Activated CD8-positive, alpha-beta memory T cell treated with anti-CD3 and anti-CD28 coated beads, Interleukin-2, amount 10 ng/mL, durations not matched to agents 7 days and 5 days (primary cell): ENCODE measurements at regions of chr10 and their contacts with region 1.

Region 1: GRCh38 chr10:84415539-84416244 is 87.3 kb downstream of the CCSER2 start:
- DNase-seq: no peak
- ATAC-seq: no peak
- H3K4me3 Mint-ChIP-seq: no peak overlapping the region
- H3K27ac Mint-ChIP-seq: no peak overlapping the region
- H3K4me1 Mint-ChIP-seq: peaks cover 2% of the 10 kb centered on the region
- H3K27me3 Mint-ChIP-seq: no peaks in the 10 kb centered on the region

Region 2: GRCh38 chr10:84429926-84430520 is 14.3 kb after region 1 on chr10:
- CTCF ChIA-PET with region 1: interaction called, 16 read pairs
- DNase-seq: peak; percentile 75
- ATAC-seq: peak; percentile 82
- H3K4me3 Mint-ChIP-seq: no peak overlapping the region
- H3K27ac Mint-ChIP-seq: no peak overlapping the region
- H3K4me1 Mint-ChIP-seq: peaks cover 10% of the 10 kb centered on the region
- H3K27me3 Mint-ChIP-seq: no peaks in the 10 kb centered on the region